ENCODE measurements at regions of chr16 and their contacts with region 1.

Region 1: GRCh38 chr16:81730090-81731051 is 48.7 kb upstream of the PLCG2 start:
- DNase-seq: peak; percentile 99
- ATAC-seq: peak; percentile 96
- H3K4me3 Mint-ChIP-seq: peak overlapping the region; percentile 64
- H3K27ac Mint-ChIP-seq: peak overlapping the region; percentile 96
- H3K4me1 Mint-ChIP-seq: peaks cover 30% of the 10 kb centered on the region
- H3K27me3 Mint-ChIP-seq: no peaks in the 10 kb centered on the region
- CTCF ChIP-seq: peak; percentile 80

Region 2: GRCh38 chr16:81366316-81366932 is 363.9 kb before region 1 on chr16:
- CTCF ChIA-PET with region 1: interaction called, 11 read pairs
- POLR2A ChIA-PET with region 1: no interaction called
- DNase-seq: no peak
- ATAC-seq: peak; percentile 63
- H3K4me3 Mint-ChIP-seq: no peak overlapping the region
- H3K27ac Mint-ChIP-seq: no peak overlapping the region
- H3K4me1 Mint-ChIP-seq: no peaks in the 10 kb centered on the region
- H3K27me3 Mint-ChIP-seq: no peaks in the 10 kb centered on the region; the same call in 1 of the 2 replicates
- CTCF ChIP-seq: peak; percentile 46

Region 3: GRCh38 chr16:81403616-81404373 is 326.6 kb before region 1 on chr16:
- CTCF ChIA-PET with region 1: interaction called, 19 read pairs
- POLR2A ChIA-PET with region 1: no interaction called
- DNase-seq: peak; percentile 94
- ATAC-seq: peak; percentile 85
- H3K4me3 Mint-ChIP-seq: peak overlapping the region; percentile 35
- H3K27ac Mint-ChIP-seq: no peak overlapping the region
- H3K4me1 Mint-ChIP-seq: no peaks in the 10 kb centered on the region
- H3K27me3 Mint-ChIP-seq: peaks cover 6% of the 10 kb centered on the region
- CTCF ChIP-seq: peak; percentile 96

Region 4: GRCh38 chr16:81623363-81624102 is 106.8 kb before region 1 on chr16:
- CTCF ChIA-PET with region 1: interaction called, 10 read pairs
- POLR2A ChIA-PET with region 1: no interaction called
- DNase-seq: peak; percentile 50
- ATAC-seq: peak; percentile 62
- H3K4me3 Mint-ChIP-seq: no peak overlapping the region
- H3K27ac Mint-ChIP-seq: peak overlapping the region; percentile 75
- H3K4me1 Mint-ChIP-seq: peaks cover 3% of the 10 kb centered on the region; the same call in 1 of the 2 replicates
- H3K27me3 Mint-ChIP-seq: no peaks in the 10 kb centered on the region
- CTCF ChIP-seq: peak; percentile 44; the same call in 1 of the 2 replicates

Region 5: DNA sequence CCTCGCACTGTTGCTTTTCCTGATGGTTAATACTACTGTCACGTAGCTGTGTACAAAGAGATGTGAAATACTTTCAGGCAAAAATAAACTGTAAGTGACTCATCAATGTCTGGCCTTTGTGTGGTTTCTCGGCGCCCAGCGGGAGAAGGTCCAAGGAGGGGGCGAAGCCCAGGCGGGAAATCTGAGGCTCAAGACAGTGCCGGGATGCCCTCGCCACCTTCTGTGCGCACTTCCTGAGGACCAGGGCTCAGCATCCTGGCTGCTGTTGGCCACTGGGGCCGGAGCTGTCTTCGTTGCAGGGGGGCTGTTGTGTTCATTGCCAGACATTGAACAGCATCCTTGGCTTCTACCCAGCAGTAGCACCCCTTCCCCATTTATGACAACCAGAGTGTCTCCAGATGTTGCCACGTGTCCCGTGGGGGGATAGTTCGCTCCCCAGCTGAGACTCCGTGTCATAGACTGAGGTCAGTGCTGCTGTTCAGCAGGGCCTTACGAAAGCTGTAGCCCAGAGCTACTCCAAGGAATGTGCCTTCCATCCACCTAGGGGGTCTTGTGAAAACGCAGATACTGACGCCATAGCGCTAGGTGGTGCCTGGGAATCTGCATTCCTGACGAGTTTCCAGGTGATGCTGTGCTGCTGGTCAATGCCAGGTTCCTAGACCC is 18.6 kb before region 1 on chr16:
- CTCF ChIA-PET with region 1: interaction called, 26 read pairs
- POLR2A ChIA-PET with region 1: interaction called, 3 read pairs
- DNase-seq: peak; percentile 49
- ATAC-seq: peak; percentile 46
- H3K4me3 Mint-ChIP-seq: peak overlapping the region; percentile 40
- H3K27ac Mint-ChIP-seq: peak overlapping the region; percentile 68; the same call in 1 of the 2 replicates
- H3K4me1 Mint-ChIP-seq: peaks cover 62% of the 10 kb centered on the region
- H3K27me3 Mint-ChIP-seq: no peaks in the 10 kb centered on the region
- CTCF ChIP-seq: no peak

Measured in WTC11 (cell line).